ENCODE measurements at regions of chr15 and their contacts with region 1.

Region 1: DNA sequence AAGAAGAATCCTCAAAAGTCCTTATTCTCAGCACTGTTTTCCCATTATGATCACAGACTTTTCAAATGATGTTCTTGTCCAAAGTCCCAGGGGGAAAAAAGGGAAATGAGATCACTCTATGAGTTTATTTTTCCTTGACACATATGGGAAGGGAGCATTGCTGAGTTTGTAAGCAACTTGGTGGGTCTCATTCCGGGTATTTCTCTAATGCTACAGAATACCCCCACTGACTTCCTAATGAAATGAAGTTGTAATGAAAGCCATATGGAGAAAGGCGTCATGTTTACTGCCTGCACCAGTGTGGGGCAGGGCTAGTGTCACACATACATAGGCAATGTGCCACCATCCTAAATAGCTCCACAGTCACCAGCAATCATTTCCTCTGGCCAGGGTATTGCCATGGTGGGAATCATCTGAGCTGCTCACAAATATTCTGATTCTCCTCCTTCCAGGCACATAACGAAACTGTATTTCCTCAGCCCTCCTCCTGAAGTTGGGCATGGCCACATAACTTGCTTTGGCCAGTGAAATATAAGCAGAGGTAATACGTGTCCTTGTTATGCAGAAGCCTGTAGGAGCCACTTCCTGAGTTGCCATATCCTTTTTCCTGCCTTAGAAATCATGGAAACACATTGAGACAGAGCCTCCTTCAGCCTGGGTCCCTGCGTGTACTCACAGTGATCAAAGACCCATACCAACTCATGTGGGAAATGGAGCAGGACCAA is 41.0 kb upstream of the C15orf61 start:
- DNase-seq: no peak
- ATAC-seq: no peak
- H3K4me3 ChIP-seq: no peak overlapping the region
- H3K4me3 Mint-ChIP-seq: no peak overlapping the region
- H3K27ac ChIP-seq: no peak overlapping the region
- H3K27ac Mint-ChIP-seq: no peak overlapping the region
- H3K4me1 ChIP-seq: no peaks in the 10 kb centered on the region
- H3K4me1 Mint-ChIP-seq: peaks cover 10% of the 10 kb centered on the region
- H3K27me3 ChIP-seq: no peaks in the 10 kb centered on the region
- H3K27me3 Mint-ChIP-seq: no peaks in the 10 kb centered on the region
- CTCF ChIP-seq: no peak

Region 2: GRCh38 chr15:67433495-67434099 is 46.3 kb before region 1 on chr15:
- CTCF ChIA-PET with region 1: no interaction called
- POLR2A ChIA-PET with region 1: no interaction called
- intact Hi-C with region 1: loop called in 1 of 2 experiments (anchors 5 kb)
- DNase-seq: peak in 3 of 9 experiments; percentile 9 to 33 (median 20)
- ATAC-seq: no peak
- H3K4me3 ChIP-seq: no peak overlapping the region
- H3K4me3 Mint-ChIP-seq: no peak overlapping the region
- H3K27ac ChIP-seq: no peak overlapping the region
- H3K27ac Mint-ChIP-seq: no peak overlapping the region
- H3K4me1 ChIP-seq: no peaks in the 10 kb centered on the region
- H3K4me1 Mint-ChIP-seq: no peaks in the 10 kb centered on the region
- H3K27me3 ChIP-seq: no peaks in the 10 kb centered on the region
- H3K27me3 Mint-ChIP-seq: no peaks in the 10 kb centered on the region
- CTCF ChIP-seq: peak; percentile 49

Measured in CD8-positive, alpha-beta T cell (primary cell).